Vagina (tissue), 2 donors: ENCODE measurements at regions of chr9 and their contacts with region 1.

Region 1: GRCh38 chr9:7075154-7075553 is 317.4 kb downstream of the KDM4C start:
- DNase-seq: no peak
- H3K4me3 ChIP-seq: no peak overlapping the region
- H3K27ac ChIP-seq: no peak overlapping the region
- H3K4me1 ChIP-seq: no peaks in the 10 kb centered on the region
- H3K27me3 ChIP-seq: no peaks in the 10 kb centered on the region
- CTCF ChIP-seq: no peak
- POLR2A ChIP-seq: no peak

Region 2: GRCh38 chr9:7028591-7028990 is 46.6 kb before region 1 on chr9:
- intact Hi-C with region 1: loop called (anchors 5 kb)
- DNase-seq: no peak
- H3K4me3 ChIP-seq: no peak overlapping the region
- H3K27ac ChIP-seq: no peak overlapping the region
- H3K4me1 ChIP-seq: no peaks in the 10 kb centered on the region
- H3K27me3 ChIP-seq: no peaks in the 10 kb centered on the region
- CTCF ChIP-seq: no peak
- POLR2A ChIP-seq: no peak

Region 3: GRCh38 chr9:7147121-7148090 is 72.3 kb after region 1 on chr9:
- intact Hi-C with region 1: no loop called
- DNase-seq: no peak
- H3K4me3 ChIP-seq: no peak overlapping the region
- H3K27ac ChIP-seq: peak overlapping the region; percentile 3
- H3K4me1 ChIP-seq: peaks cover 32% of the 10 kb centered on the region
- H3K27me3 ChIP-seq: no peaks in the 10 kb centered on the region
- CTCF ChIP-seq: no peak
- POLR2A ChIP-seq: no peak

Region 4: GRCh38 chr9:7298123-7298522 is 223.0 kb after region 1 on chr9:
- intact Hi-C with region 1: no loop called
- DNase-seq: no peak
- H3K4me3 ChIP-seq: no peak overlapping the region
- H3K27ac ChIP-seq: no peak overlapping the region
- H3K4me1 ChIP-seq: no peaks in the 10 kb centered on the region
- H3K27me3 ChIP-seq: no peaks in the 10 kb centered on the region
- CTCF ChIP-seq: no peak
- POLR2A ChIP-seq: no peak